ENCODE measurements at regions of chr16 and their contacts with region 1.

Region 1: DNA sequence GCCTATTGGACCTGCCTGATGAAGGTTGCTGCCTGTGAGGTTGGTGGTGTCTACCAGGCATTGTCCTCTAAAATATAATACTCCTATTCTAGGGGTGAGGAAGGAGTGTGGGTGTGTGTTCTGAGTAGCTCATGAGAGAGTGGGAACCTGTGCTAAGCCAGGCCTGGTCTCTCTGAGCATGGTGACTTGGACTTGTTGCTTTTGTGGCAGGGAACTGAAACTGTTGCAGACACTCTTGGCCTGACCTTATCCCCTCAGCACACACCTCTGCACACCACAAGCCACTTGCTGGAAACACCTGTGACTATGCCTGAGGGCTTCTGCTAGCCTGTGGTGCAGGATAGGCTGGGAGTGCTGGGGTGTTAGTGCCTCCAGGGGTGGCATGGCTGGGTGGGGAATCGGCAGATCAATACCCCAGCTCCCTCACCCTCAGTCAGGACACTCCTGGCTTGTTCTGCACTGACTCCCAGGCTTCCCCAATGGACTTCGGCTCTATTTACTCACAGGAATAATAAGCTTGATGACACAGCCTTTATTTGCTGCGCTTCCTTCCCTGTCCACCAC is 29.9 kb downstream of the PLCG2 start:
- DNase-seq: peak; percentile 99
- ATAC-seq: peak; percentile 75
- H3K4me3 ChIP-seq: peak overlapping the region; percentile 48; the same call in 1 of the 2 replicates
- H3K27ac ChIP-seq: peak overlapping the region; percentile 99
- H3K4me1 ChIP-seq: peaks cover 78% of the 10 kb centered on the region
- H3K27me3 ChIP-seq: no peaks in the 10 kb centered on the region
- CTCF ChIP-seq: no peak
- EP300 ChIP-seq: peak; percentile 98
- POLR2A ChIP-seq: peak; percentile 61
- RAD21 ChIP-seq: peak; percentile 9; the same call in 1 of the 2 replicates

Region 2: DNA sequence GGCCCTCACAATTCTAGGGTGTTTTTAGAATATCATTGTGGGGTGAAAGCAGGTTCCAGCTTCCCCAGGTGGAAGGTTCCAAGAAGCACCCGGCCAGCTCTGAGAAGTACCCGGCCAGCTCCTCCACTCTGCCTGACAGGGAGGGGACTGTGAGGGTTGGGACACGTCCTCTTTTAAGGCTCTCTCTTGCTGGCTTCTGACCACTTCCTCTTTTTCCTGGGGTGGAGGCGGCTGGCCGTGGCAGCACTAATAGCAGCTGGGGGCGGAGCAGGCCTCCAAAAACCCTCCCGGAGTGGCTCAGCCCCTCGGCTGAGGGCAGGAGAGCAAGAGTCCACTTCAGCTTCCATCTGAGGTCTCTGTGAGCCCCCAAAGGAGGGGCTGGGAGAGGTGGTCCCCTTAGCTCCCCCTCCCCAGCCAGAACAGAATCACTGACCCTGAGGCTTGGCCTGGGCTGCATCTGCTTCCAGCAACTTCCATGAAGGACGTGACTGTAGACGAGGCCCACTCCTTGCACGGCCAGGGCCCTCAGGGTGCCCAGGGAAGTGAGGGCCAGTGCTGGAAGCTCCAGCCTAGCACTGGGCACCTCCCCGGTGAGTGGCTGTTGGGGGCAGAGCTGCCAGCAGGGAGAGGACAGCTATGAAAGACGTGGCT is 56.7 kb before region 1 on chr16:
- CTCF ChIA-PET with region 1: interaction called, 4 read pairs
- POLR2A ChIA-PET with region 1: interaction called, 14 read pairs
- RAD21 ChIA-PET with region 1: interaction called, 27 read pairs
- SMC1A ChIA-PET with region 1: interaction called, 8 read pairs
- in situ Hi-C with region 1: no loop called
- intact Hi-C with region 1: no loop called
- DNase-seq: peak; percentile 72
- ATAC-seq: peak; percentile 97
- H3K4me3 ChIP-seq: peak overlapping the region; percentile 54; the same call in 1 of the 2 replicates
- H3K27ac ChIP-seq: peak overlapping the region; percentile 68
- H3K4me1 ChIP-seq: peaks cover 46% of the 10 kb centered on the region
- H3K27me3 ChIP-seq: no peaks in the 10 kb centered on the region
- CTCF ChIP-seq: no peak
- EP300 ChIP-seq: peak in 1 of 2 experiments; percentile 86; a peak in 3 of 4 replicates
- POLR2A ChIP-seq: peak; percentile 86
- RAD21 ChIP-seq: no peak

Region 3: DNA sequence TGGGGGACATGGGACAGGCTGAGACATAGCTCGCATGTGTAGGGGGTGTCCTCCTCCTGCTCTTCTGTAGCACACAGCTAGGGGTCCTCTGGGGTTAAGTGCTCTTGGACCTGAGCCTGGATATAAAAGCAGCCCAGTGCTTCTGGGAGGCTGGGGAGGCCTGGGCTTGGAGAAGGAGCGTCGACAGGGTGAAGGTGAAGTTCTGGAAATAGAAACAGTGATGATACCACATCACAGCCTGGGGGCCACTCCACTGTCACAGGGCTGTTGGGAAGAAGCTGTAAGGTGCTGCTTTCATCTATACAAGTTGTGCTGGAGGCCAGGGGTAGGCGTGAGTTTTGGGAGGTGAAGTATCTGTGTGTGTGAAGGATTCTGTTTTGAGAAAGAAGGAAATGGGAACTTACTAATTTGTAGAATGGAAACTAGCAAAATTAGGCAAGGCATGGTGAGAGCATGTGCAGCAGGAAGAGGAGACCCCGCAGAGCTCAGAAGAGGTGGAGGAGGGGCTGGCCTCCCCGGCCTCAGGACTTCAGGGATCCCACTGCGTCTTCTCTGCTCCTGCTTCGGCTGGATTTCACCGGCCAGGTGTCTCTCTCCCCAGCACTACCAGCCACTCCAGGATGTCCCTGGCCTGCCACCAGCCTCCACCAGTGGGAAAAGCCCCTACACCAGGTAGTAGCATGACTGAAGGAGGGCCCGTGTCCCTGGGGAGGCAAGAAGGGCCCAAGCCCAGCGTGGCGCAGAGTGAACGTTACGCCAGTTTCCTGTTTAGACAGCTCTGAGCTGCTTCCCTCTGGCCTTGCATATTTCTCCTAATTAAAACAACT is 10.5 kb before region 1 on chr16:
- CTCF ChIA-PET with region 1: interaction called, 9 read pairs
- POLR2A ChIA-PET with region 1: interaction called, 26 read pairs
- RAD21 ChIA-PET with region 1: interaction called, 40 read pairs
- SMC1A ChIA-PET with region 1: interaction called, 57 read pairs
- in situ Hi-C with region 1: no loop called
- intact Hi-C with region 1: loop called (anchors 1 kb)
- DNase-seq: peak; percentile 97
- ATAC-seq: peak; percentile 76
- H3K4me3 ChIP-seq: peak overlapping the region; percentile 62
- H3K27ac ChIP-seq: peak overlapping the region; percentile 98
- H3K4me1 ChIP-seq: peaks cover 52% of the 10 kb centered on the region
- H3K27me3 ChIP-seq: no peaks in the 10 kb centered on the region
- CTCF ChIP-seq: peak in 2 of 3 experiments; percentile 27 to 36; a peak in 4 of 6 replicates
- EP300 ChIP-seq: peak; percentile 80 to 84; a peak in 3 of 4 replicates
- POLR2A ChIP-seq: peak; percentile 50; the same call in 1 of the 2 replicates
- RAD21 ChIP-seq: no peak; the same call in 1 of the 2 replicates

Region 4: DNA sequence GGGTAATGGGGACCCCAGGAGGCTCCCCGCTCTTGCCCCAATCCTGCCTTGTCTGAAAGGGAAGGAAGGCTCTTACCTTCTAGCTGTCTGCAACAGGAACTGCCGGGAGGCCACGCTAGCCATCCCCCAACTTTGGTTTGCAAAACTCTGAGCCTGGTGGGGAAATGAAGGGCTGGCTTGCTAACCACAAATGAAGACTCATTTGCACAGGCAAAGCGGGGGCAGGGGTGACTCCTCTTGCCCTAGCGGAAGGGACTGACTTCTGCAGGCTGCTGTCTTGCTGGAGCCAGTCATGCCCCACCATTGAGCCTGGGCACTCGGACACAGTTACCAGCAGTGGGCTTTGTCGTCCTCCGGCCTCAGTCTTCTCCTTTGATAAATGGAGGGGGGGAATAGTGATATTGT is 22.7 kb after region 1 on chr16:
- CTCF ChIA-PET with region 1: interaction called, 3 read pairs
- POLR2A ChIA-PET with region 1: interaction called, 7 read pairs
- RAD21 ChIA-PET with region 1: interaction called, 5 read pairs
- SMC1A ChIA-PET with region 1: interaction called, 135 read pairs
- in situ Hi-C with region 1: no loop called
- intact Hi-C with region 1: no loop called
- DNase-seq: peak; percentile 82
- ATAC-seq: peak; percentile 91
- H3K4me3 ChIP-seq: peak overlapping the region; percentile 64
- H3K27ac ChIP-seq: peak overlapping the region; percentile 95
- H3K4me1 ChIP-seq: peaks cover 87% of the 10 kb centered on the region
- H3K27me3 ChIP-seq: no peaks in the 10 kb centered on the region
- CTCF ChIP-seq: peak; percentile 20 to 60 (median 55); a peak in 5 of 6 replicates
- EP300 ChIP-seq: 0 out of 4 replicates have a peak, but pooled peaks have one; percentile 25 to 56
- POLR2A ChIP-seq: peak; percentile 77
- RAD21 ChIP-seq: peak; percentile 42

Region 5: GRCh38 chr16:82091241-82091640 is 282.2 kb after region 1 on chr16:
- CTCF ChIA-PET with region 1: no interaction called
- POLR2A ChIA-PET with region 1: no interaction called
- RAD21 ChIA-PET with region 1: no interaction called
- SMC1A ChIA-PET with region 1: no interaction called
- in situ Hi-C with region 1: no loop called
- intact Hi-C with region 1: no loop called
- DNase-seq: no peak
- ATAC-seq: no peak
- H3K4me3 ChIP-seq: no peak overlapping the region
- H3K27ac ChIP-seq: no peak overlapping the region
- H3K4me1 ChIP-seq: no peaks in the 10 kb centered on the region
- H3K27me3 ChIP-seq: no peaks in the 10 kb centered on the region; a peak in 2 of 4 replicates
- CTCF ChIP-seq: no peak
- EP300 ChIP-seq: no peak
- POLR2A ChIP-seq: no peak
- RAD21 ChIP-seq: no peak

Region 6: GRCh38 chr16:82653550-82654511 is 844.8 kb after region 1 on chr16:
- CTCF ChIA-PET with region 1: no interaction called
- POLR2A ChIA-PET with region 1: no interaction called
- RAD21 ChIA-PET with region 1: no interaction called
- SMC1A ChIA-PET with region 1: no interaction called
- in situ Hi-C with region 1: no loop called
- intact Hi-C with region 1: loop called (anchors 5 kb)
- DNase-seq: peak; percentile 90
- ATAC-seq: peak; percentile 76
- H3K4me3 ChIP-seq: peak overlapping the region; percentile 20; the same call in 1 of the 2 replicates
- H3K27ac ChIP-seq: peak overlapping the region; percentile 96
- H3K4me1 ChIP-seq: peaks cover 56% of the 10 kb centered on the region
- H3K27me3 ChIP-seq: no peaks in the 10 kb centered on the region
- CTCF ChIP-seq: no peak
- EP300 ChIP-seq: peak; percentile 85 to 89
- POLR2A ChIP-seq: peak; percentile 64
- RAD21 ChIP-seq: no peak